ENCODE measurements at regions of chr2 and their contacts with region 1.

Region 1: GRCh38 chr2:37005118-37005868 is 39.0 kb upstream of the STRN start:
- DNase-seq: peak in 1 of 2 donors; percentile 23
- ATAC-seq: peak; percentile 76

Region 2: DNA sequence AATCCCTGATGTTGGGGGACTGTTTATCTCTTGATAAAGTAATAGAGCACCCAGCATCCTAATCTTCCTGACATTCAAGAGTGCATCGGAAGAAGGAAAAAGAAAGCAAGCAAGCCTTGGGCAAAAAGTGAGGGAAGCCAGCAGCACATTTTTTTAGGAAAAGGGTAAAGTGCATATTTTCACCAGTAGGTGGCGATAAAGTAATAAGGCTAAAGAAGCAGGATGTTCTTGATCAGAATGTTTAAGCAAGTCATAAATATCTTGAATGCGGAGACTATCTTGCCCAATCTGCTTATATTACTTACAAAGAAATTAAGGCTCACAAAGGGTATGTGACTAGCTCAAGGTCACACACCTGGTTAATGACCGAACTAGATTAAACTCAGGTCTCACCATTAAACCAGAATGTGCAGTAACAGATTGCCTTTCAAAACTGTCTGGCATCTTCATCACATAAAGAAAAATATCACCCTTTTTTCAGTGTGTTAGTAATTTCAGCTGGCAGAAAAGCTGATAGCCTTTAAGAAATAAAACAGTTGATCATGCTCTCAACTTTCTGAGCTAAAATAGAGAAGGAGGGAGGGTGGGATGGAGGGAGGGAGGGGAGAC is 225.0 kb before region 1 on chr2:
- intact Hi-C with region 1: loop called in 1 of 2 experiments (anchors 5 kb)
- DNase-seq: no peak
- ATAC-seq: peak; percentile 53

Region 3: DNA sequence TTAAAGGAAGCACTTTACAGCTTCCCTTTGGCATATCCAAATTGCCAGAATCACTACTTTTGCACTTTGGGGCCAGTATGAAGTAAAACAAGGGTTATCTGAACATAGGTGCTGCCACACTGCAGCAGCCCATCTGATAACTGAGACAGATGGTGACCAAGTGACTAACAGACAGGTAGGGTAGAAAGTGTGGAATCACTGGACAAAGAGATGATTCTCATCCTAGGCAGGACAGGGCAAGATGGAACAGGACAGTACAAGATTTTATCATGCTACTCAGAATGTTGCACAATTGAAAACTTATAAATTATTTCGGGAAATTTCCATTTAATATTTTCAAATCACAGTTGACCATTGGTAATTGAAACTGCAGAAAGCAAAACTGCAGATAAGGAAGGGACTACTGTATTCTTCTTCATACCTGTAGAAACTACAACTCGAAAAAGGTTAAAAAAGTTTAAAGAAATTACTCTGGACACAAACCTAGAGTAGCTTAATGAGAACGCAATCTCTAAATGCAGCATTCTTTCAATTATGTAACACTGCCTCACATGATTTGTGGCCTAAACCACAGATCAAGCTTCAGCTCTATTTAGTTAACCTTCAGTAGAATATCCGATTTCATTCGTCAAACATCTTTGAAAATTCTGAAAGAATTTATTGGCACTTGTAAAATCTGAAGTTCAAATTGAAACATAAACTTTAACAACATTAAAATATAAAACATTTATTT is 47.5 kb after region 1 on chr2:
- intact Hi-C with region 1: loop called in 1 of 2 experiments (anchors 10 kb)
- DNase-seq: no peak
- ATAC-seq: no peak

Measured in left colon (tissue), 2 donors.